ENCODE measurements at regions of chr2 and their contacts with region 1.

Region 1: DNA sequence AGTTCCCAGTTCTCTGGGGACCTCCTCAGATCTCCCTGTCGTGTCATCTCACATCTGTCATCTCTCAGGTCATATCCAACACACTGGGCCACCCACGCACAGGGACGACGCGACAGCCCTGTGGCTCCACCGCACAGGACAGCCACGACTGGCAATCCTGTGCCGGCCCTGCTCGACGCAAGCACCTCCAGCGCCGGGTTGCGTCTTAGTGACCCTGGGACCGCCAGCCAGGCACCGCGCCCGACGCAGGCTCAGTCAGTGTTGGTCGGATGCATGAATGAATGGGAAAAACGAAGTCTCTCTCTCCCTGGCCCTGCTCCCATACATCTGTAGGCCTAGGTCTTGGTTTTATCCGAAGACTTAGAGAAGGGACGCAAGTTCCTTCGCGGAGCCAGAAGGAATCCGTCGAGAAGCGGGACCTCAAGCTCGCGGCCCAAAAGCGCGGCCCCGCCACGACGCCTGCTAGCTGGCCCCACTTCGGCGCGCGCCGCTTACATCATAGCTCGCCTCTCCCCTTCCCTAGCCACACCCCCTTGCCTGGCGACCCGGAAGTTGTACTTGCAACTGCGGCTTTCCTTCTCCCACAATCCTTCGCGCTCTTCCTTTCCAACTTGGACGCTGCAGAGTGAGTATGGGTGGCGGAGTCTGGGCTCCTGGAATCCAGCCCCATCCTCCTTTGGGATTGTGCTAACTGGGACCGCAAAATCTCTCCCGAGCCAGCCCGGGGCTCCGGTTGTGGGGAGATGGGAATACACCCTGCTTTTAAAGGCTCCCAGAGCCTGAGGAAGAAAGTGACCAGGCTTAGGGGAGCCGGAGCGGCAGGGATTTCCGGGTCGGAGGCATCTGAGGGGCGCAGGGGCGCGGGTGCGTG is at the start of gene RPL31:
- DNase-seq: peak; percentile 80
- H3K4me3 ChIP-seq: peak within 1 kb of the TSS; percentile 70
- CTCF ChIP-seq: no peak

Region 2: GRCh38 chr2:100902833-100903405 is 99.0 kb before region 1 on chr2:
- CTCF ChIA-PET with region 1: no interaction called
- POLR2A ChIA-PET with region 1: interaction called, 10 read pairs
- DNase-seq: peak; percentile 85
- H3K4me3 ChIP-seq: no peak overlapping the region
- CTCF ChIP-seq: peak; percentile 31

Region 3: GRCh38 chr2:100984892-100985379 is 17.0 kb before region 1 on chr2:
- CTCF ChIA-PET with region 1: interaction called, 14 read pairs
- POLR2A ChIA-PET with region 1: interaction called, 4 read pairs
- DNase-seq: no peak
- H3K4me3 ChIP-seq: no peak overlapping the region
- CTCF ChIP-seq: peak; percentile 91

Region 4: DNA sequence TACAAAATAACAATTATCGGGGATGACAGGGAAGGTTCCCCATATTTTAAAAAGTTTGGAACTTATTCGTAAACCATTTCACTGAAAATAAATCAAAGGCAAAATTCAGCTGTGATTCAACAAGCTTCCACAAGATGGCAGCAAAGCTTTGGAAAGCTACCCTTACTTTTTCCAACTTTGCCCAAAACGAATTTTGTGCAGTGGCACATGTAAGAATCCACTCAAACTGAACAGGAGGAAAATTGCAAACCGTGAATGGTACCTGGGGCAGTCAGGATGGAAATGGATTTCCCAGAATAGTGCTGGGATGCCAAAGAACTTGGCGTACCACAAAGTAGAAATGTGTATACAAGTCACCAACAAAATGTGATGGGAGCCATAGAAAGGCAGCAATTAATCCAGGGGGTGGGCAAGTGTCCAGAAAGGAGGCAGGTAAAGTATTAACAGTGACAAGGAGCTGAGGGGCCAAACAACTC is 10.8 kb after region 1 on chr2:
- CTCF ChIA-PET with region 1: interaction called, 38 read pairs
- POLR2A ChIA-PET with region 1: interaction called, 6 read pairs
- DNase-seq: no peak
- H3K4me3 ChIP-seq: no peak overlapping the region
- CTCF ChIP-seq: peak; percentile 62

Region 5: GRCh38 chr2:101063352-101064124 is 61.6 kb after region 1 on chr2:
- CTCF ChIA-PET with region 1: no interaction called
- POLR2A ChIA-PET with region 1: no interaction called
- DNase-seq: peak; percentile 47
- H3K4me3 ChIP-seq: no peak overlapping the region
- CTCF ChIP-seq: no peak

Region 6: DNA sequence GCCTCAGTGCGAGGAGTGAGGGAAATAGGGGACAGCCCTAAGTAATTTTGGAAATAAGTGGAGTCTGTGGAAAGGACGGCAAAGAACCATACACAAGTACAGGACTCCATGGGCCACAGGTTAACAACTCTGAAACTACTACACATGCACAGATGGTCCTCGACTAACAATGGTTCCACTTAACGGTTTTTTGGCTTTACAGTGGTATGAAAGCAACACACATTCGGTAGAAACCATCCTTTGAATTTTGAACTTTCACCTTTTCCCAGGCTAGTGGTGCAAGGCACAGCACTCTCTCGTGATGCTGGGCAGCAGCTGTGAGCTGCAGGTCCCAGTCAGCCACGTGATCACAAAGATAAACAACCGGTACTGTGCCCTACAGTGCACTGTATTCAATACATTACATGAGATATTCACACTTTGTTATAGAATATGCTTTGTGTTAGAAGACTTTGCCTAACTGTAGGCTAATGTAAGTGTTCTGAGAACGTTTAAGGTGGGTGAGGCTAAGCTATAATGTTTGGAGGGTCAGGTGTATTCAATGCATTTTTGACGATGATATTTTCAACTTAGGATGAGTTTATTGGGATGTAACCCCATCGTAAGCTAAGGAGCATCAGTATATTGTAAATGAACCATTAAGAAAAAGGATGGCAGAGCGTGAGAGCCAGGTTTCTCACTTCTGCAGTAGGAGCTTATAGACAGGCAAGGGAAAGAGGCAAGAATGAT is 104.7 kb after region 1 on chr2:
- CTCF ChIA-PET with region 1: no interaction called
- POLR2A ChIA-PET with region 1: no interaction called
- DNase-seq: no peak
- H3K4me3 ChIP-seq: no peak overlapping the region
- CTCF ChIP-seq: no peak

Measured in AG04449 (cell line).